Left colon (tissue), 2 donors: ENCODE measurements at regions of chr12 and their contacts with region 1.

Region 1: DNA sequence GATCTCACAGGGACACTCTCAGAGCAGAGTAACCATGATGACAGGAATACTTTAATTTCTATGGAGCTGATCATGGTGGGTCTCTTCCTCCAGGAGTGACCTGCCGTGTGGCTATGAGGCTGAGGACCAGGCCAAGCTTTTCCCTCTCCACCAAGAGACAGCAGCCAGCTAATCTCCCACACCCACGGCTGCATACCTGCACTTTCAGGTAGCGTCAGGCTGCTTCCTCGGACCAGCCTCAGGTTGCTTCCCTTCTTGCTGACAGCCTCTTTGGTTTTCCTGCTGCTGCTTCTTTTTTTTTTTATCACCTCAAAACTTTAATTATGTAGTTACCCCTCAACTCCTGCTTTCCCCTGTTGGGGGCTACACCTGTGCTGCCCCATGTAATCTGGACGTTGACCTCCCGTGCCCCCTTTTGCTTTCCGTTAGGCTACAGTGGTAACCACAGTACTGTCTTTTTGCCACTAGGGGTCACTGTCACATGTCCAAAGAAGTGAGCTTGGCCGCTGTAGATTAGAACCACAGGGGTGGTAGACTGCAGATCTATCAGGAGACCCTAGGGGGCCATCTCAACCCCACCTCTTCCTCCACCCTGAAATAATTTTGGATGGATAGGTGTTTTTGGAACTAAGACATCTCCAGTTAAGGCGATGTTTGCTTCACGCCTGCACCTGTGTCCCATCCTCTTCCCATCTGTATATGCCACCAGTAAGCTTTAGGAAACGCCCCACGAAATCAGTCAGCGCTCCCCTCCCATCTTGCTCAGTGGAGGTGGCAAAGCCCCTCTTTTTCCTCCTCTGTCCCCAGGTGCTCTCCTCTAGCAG is 7.8 kb upstream of the PIP4K2C start:
- DNase-seq: peak; percentile 32 to 52
- ATAC-seq: peak; percentile 86

Region 2: DNA sequence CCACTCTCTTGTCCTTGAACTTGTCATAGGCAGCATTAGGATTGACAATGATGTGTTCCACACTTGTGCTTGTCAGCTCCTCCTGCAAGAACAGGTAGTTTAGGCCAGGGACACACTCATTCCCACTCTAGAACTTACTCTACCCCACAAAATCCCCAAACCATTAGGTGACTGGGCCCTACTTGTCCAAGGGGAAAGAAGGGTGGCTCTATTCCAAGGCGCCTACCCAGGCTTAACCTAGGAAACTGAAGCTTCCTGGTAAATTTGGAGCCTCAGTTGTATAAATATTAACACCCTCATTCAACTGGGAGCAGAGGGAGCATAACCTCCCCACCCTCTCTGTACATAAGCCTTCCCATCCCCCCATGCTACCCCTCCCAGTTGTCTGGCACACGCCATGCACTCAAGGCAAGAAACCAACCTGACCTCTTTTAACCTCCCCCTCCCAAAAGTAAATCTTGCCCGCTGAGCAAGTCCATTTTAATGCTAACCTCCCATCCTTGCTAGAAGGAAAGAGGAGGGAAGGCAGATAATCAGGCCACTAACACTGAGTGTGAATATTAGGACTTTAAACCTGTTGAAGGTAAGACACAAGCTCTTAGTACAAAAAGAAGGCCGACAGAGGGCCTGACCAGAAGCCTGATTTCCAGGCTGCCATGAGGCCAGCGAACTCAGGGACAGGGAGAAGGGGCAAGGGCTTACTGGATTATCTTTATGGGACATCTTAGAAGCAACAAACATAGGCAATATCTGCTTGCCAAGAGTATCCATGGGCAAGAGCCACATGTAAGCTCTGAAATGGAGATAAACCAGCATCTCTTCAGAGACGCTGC is 47.2 kb before region 1 on chr12:
- intact Hi-C with region 1: no loop called
- DNase-seq: peak; percentile 43 to 48
- ATAC-seq: peak; percentile 80

Region 3: GRCh38 chr12:57621497-57622292 is 38.5 kb after region 1 on chr12:
- intact Hi-C with region 1: loop called (anchors 2 to 5 kb)
- DNase-seq: peak in 1 of 2 donors; percentile 74
- ATAC-seq: peak; percentile 77

Region 4: DNA sequence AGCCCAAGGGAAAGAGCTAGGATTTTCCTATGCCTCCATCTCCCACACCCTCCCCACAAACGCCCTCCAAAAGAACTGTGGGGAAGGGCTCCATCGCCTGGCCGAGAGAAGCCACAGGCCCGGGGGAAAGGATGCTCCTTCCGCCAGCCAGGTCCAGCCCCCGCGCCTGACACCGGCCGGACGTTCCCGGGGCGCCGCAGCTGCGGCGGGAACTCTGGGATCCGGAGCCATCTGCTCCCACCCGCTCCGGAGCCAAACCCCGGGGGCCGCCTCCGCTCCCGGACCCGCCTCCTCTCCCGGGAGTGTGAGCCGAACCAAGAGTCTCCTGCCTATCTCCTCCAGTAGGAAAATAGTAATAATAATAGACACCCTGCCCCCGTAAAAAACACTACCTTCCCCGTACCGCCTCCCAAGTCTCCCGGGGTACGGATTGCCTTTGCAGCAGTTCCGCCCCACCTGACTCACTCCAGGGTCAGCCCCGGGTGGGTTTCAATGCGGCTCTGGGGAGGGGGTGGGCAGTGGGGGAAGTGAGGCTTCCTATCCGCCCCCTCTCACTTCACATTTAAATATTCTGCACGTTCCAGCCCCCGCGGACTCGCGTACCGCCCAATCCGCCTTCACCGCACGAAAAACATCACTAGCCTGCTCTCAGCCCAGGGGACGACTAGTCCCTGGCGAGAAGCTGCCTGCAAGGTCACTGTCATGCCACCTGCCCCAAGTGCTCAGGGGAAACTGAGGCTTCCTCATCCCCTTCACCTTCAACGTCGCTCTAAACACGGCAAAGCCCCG is 152.9 kb after region 1 on chr12:
- intact Hi-C with region 1: no loop called
- DNase-seq: no peak
- ATAC-seq: peak; percentile 30